Breast epithelium (tissue), 4 donors: ENCODE measurements at regions of chr17 and their contacts with region 1.

Region 1: DNA sequence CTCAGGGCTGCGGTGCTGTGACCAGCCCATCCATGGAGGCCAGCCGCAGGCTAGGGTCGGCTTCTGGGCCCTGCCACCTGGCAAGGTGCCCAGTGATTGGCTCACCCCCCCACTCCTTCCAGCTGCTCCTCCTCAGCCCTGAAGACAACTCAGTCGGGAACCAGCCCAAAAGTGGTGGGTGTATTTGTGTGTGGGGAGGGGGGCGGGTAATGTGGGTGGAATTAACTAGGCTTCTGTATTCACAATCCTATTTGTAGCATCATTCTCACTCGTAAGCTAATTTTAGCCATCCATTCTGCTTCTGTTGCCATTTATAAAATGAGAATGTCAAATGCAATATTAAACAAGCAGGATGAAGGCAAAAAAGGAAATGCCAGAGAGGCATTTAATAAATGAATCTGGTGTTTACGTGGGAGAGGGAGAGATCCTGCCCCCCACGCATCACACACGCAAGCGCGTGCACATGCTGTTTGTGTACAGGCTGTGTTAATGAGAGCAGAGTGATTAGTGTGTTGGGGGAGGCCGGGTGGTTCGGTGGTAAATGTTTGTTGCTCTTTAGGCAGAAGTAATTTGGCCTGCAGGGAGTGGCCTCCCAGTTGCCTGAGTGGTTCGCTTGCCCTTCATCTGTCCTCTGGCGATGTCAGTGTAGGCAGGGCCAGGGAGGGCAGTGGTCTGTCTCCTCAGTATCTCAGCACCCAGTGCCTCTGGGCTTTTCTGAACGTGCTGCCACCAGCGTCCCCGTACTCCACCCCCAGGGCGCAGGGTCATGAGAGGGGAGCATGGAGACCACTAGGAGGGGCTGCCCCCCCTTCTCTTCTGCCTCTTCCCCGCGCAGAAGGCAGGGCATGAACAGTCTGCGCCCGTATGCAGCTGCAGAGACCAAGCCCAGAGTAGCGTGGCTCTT is 140.1 kb downstream of the CCDC182 start:
- DNase-seq: peak in 1 of 2 donors; percentile 24
- H3K4me3 ChIP-seq: peak overlapping the region in 1 of 3 donors; percentile 37
- H3K27ac ChIP-seq: peak overlapping the region; percentile 36 to 46
- H3K4me1 ChIP-seq: peaks cover 3 to 7% of the 10 kb centered on the region in 2 donors
- H3K27me3 ChIP-seq: no peaks in the 10 kb centered on the region
- CTCF ChIP-seq: no peak
- POLR2A ChIP-seq: no peak

Region 2: DNA sequence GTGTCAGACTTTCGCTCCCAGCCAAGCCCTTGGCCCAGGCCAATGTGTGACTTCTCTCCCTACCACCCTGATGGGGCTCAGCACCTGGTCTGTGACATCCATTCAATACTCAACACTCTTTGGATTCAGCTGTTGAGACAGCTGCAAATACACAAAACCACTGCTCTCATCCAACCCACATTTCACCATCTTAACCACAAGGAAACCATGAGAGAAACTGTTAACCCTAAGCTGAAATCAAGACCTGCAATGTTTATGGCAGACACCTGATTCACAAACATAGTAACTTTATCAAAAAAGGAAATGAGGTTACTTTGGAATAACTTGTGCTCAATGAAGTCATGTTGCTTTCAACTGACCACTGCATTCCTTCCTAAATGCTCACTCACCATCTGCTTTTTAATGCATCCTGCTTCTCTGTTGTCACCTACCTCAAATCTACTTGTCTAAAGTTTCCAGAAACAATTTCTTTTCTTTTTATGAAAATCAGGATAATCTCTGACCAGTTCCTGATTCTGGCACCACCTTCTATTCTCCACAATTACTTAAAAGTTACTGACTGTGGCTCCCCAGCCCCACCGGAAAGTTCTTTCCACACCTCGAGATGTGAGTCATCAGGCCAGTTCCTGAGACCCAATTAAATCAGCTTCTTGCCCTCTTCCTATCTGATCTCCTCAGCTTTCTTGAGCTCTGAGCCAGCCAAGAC is 923.3 kb before region 1 on chr17:
- intact Hi-C with region 1: loop called (anchors 10 kb)
- DNase-seq: no peak
- H3K4me3 ChIP-seq: no peak overlapping the region
- H3K27ac ChIP-seq: no peak overlapping the region
- H3K4me1 ChIP-seq: no peaks in the 10 kb centered on the region
- H3K27me3 ChIP-seq: peaks cover 0 to 17% of the 10 kb centered on the region in 2 donors
- CTCF ChIP-seq: no peak
- POLR2A ChIP-seq: no peak

Region 3: DNA sequence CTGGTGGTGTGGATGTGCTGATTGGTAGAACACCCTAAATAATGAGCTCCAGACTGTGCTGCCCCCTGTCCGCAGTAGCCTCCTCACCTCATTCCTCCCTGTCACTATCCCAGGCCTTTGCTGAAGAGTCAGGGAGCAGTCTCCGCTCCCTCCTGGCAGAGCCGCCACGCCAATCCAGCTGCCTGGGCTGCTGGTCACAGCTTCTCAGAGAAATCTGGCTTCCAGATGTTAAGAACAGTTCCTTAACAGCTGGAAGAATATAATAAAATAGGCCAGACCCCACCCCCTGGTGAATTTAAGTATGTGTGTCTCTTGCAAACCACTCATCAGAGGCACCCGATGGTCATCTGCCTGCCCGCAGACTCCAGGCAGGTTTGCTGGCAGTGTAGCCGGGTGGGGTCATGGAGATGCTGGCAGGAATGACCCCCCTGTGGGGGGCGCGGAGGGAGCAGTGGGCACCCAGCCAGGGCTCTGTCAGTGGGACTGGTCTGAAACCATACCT is 20.9 kb before region 1 on chr17:
- intact Hi-C with region 1: no loop called
- DNase-seq: no peak
- H3K4me3 ChIP-seq: no peak overlapping the region
- H3K27ac ChIP-seq: no peak overlapping the region
- H3K4me1 ChIP-seq: no peaks in the 10 kb centered on the region
- H3K27me3 ChIP-seq: no peaks in the 10 kb centered on the region
- CTCF ChIP-seq: no peak
- POLR2A ChIP-seq: no peak

Region 4: DNA sequence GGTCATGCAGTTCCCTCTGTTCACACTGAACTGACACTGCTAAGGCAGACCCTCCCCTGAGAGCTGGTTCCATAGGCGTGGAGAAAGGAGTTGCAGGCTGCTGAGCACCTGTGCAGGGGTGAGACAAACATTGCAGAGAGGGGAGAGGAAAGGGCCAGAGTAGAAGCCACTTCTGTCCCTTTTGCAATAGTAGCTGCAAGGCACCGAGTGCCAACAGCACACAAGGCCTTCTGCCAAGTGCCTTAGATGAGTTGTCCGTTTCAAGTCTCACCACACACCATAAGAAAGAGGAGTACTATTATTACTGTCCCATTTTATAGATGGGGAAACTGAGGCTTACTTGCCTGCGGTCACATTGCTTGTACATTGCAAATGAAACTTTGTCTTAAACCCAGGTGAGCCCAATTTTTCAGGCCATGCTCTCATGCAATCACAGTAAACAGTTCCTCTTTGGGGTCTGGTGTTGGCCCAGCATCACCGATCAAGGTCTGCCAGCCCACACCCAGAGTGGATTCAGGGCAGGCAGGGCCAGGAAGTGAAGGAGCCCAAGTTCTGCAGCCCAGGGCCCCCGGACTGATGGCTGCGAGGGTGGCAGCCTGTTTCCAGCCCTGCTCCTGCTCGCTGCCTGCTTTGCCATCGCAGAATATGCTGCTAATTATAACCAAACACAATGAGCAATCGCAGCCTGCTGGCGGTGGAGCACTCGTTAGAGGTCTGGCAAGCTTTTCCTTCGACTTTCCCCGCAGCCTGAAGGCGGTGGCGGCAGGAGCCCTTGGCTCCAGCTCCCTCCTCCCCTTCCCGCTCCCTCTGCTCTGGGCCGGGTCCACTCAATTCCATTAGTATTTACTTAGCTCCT is 441.4 kb after region 1 on chr17:
- intact Hi-C with region 1: no loop called
- DNase-seq: no peak
- H3K4me3 ChIP-seq: no peak overlapping the region
- H3K27ac ChIP-seq: no peak overlapping the region
- H3K4me1 ChIP-seq: no peaks in the 10 kb centered on the region
- H3K27me3 ChIP-seq: no peaks in the 10 kb centered on the region
- CTCF ChIP-seq: no peak
- POLR2A ChIP-seq: no peak